Right cardiac atrium (tissue), 5 donors: ENCODE measurements at regions of chr4 and their contacts with region 1.

Region 1: DNA sequence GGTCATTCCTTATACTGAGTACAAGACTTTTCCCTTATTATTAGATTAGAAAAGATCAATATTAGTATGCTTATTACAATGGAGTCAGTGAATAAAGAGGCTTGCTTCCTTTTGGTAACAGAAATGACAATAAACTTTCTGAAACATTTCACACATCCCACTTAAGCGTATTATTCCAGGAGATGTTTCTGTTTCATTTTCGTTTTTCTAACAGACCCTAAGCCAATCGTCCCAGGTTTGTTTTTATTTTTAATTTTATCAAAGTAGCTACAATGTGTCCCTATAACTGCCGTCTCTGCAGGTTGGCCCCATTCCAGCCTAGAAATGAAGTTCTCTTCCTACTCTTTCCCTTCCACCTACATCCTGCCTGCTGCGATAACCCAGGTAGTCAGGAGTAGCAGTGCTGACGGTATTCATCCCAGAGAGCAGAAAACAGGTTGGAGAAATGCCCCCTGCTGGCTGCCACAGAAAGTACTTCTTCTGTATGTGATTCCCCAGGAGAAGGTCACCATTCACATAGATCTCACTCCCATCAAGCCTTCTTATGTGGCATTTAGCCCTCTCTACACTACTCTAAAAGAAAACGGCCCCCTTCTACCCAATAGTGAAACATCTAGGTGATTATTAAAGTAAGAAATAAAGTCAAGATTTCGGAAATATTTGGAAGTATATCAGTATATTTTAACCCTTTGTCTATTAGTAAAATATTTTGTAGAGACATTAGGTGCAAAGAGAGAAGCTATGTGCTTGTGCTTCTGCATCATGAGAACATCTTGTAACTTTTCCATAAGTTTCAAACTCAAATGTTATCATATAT is 40.4 kb downstream of the ENPEP start:
- DNase-seq: peak; percentile 64 to 79 (median 65)
- ATAC-seq: peak; percentile 88 to 96
- H3K4me3 ChIP-seq: peak overlapping the region; percentile 56
- H3K27ac ChIP-seq: no peak overlapping the region
- H3K4me1 ChIP-seq: no peaks in the 10 kb centered on the region
- H3K27me3 ChIP-seq: no peaks in the 10 kb centered on the region

Region 2: DNA sequence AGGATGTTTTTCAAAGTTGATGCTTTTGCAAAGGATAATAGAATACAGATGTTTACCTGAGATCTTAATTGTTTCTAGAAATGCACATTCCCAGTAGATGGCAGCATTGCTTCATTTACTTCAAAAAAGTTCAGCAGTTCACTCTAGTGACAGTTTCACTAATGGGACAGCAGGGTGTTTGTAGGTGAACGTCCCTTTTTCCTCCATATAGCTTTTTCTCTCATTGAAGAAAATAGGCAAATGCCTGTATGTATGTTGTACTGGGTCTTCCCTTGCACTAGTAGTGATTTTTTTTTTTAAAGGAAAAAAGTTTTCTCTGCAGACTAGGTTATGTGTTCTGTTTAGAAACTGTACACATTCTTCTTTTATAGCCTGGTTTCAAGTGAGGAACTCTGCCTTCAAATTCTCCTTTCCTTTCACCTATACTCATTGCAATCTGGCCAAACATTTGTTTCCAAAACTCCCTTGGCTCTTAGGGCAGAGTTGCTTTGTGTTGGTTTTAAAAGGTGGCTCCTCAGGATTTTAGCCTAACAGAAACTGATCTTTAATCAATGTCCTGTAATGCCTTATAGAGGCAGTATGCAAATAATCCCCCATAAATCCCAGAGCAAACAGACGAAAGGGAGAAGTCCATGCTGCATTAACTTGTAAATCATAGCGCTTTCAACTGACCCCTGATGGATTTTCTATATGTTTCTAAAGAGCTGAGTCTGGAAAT is 517.3 kb before region 1 on chr4:
- intact Hi-C with region 1: loop called (anchors 2 to 10 kb)
- DNase-seq: no peak
- ATAC-seq: peak in 1 of 2 donors; percentile 69
- H3K4me3 ChIP-seq: no peak overlapping the region
- H3K27ac ChIP-seq: no peak overlapping the region
- H3K4me1 ChIP-seq: no peaks in the 10 kb centered on the region
- H3K27me3 ChIP-seq: no peaks in the 10 kb centered on the region

Region 3: GRCh38 chr4:110005461-110006056 is 510.8 kb before region 1 on chr4:
- intact Hi-C with region 1: loop called in 2 of 4 experiments (anchors 2 to 10 kb)
- DNase-seq: no peak
- ATAC-seq: no peak
- H3K4me3 ChIP-seq: no peak overlapping the region
- H3K27ac ChIP-seq: no peak overlapping the region
- H3K4me1 ChIP-seq: no peaks in the 10 kb centered on the region
- H3K27me3 ChIP-seq: no peaks in the 10 kb centered on the region

Region 4: DNA sequence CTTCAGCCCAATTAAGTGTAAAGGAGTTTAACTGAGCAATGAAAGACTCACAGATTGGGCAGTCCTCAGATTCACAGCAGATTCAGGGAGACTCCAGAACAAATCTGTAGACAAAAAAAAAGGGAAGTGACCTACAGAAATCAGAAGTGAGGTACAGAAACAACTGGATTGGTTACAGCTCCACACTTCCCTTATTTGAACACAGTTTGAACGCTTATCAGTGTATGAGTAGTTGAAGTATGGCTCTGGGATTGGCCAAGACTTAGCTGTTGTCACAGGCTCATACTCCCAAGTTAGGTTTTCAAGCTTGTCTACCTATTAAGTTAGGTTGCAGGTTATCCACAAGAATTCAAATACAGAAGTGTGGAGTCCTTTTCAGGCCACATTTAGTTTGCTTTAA is 205.5 kb before region 1 on chr4:
- intact Hi-C with region 1: loop called (anchors 5 to 10 kb)
- DNase-seq: no peak
- ATAC-seq: no peak
- H3K4me3 ChIP-seq: no peak overlapping the region
- H3K27ac ChIP-seq: no peak overlapping the region
- H3K4me1 ChIP-seq: no peaks in the 10 kb centered on the region
- H3K27me3 ChIP-seq: no peaks in the 10 kb centered on the region

Region 5: DNA sequence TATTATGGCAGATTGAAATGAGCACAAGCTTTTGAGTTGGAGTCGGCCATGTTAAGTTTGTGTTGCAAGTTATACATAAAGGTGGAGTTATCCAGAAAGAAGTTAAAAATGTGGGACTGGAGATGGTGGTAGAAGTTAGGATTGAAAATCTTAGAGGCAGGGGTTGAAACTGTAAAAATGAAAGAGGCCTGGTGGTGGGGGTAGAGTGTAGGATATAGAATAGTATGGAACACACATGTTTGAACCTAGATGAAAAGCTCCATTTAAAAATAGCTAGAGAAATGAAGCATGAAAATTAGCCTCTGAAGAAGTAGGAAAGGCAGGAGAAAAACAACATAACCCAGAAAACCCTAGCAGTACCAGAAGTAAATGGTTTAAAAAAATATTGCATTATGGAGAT is 172.2 kb before region 1 on chr4:
- intact Hi-C with region 1: loop called in 2 of 4 experiments (anchors 10 kb)
- DNase-seq: no peak
- ATAC-seq: peak in 1 of 2 donors; percentile 19
- H3K4me3 ChIP-seq: no peak overlapping the region
- H3K27ac ChIP-seq: no peak overlapping the region
- H3K4me1 ChIP-seq: no peaks in the 10 kb centered on the region
- H3K27me3 ChIP-seq: no peaks in the 10 kb centered on the region